A549 (cell line): ENCODE measurements at regions of chr17 and their contacts with region 1.

Region 1: DNA sequence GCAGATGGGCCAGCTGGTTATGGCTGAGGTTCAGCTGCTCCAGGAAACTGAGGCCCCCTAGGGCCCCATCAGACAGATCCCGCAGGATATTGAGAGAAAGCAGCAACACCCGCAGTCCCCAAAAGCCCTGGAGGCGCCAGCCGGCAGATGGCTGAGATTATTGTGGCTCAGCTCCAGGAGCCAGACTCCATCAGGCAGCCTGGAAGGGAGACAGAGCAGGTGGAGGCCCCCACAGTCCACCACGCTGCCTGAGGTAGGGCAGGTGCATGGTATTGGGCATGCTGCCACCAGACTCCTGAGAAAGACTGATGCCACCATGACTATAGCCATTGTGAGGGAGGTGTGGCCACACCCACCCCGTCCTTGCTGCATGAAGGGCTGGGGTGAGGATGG is 9.5 kb upstream of the TMEM101 start:
- DNase-seq: no peak
- ATAC-seq: peak in 1 of 2 experiments; percentile 17; a peak in 3 of 6 replicates
- H3K4me3 ChIP-seq: no peak overlapping the region
- H3K27ac ChIP-seq: no peak overlapping the region
- H3K4me1 ChIP-seq: no peaks in the 10 kb centered on the region
- CTCF ChIP-seq: no peak
- EP300 ChIP-seq: no peak
- POLR2A ChIP-seq: no peak
- RAD21 ChIP-seq: no peak

Region 2: DNA sequence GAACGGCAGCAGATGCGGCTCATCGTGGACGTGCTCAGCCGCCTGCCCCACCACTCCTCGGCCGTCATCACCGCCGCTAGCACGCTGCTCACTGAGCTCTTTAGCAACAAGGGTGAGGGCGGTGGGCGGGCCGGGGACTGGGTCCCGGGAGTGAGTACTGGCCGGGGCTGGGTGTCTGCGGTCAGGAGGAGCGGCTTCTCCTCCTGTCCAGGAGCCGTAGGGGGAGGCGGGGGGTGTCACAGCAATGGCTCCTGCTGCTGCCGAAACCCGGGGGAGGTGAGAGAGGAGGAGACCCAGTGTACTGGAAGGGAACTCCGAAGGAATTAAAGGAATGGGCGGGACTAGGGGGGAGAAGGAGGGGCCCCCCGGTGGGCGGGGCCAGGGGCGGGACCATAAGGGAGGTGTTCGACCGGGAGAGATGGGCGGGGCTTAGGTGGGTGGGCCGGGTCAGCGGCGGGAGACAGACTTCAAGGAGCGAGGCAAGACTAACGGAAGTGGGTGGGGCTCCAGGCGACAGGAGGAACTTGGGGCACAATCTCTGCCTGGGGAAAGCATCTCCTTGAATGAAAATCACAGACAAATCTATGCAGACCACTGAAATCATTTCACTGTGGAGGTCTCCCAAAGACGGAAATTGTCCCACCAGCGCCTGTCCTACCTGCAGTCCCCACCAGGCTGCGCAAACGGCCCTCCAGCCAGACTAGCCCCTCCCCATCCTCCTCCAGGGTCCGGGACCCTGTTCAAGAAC is 17.5 kb before region 1 on chr17:
- CTCF ChIA-PET with region 1: interaction called, 11 read pairs
- POLR2A ChIA-PET with region 1: no interaction called
- DNase-seq: peak; percentile 97
- ATAC-seq: peak; percentile 78 to 90
- H3K4me3 ChIP-seq: peak overlapping the region; percentile 51
- H3K27ac ChIP-seq: peak overlapping the region; percentile 67 to 83
- H3K4me1 ChIP-seq: peaks cover 18% of the 10 kb centered on the region
- CTCF ChIP-seq: peak; percentile 37; the same call in 2 of the 3 replicates
- EP300 ChIP-seq: no peak
- POLR2A ChIP-seq: peak; percentile 23
- RAD21 ChIP-seq: peak in 1 of 2 experiments; percentile 33; a peak in 3 of 5 replicates